CD4-positive, alpha-beta memory T cell (primary cell): ENCODE measurements at regions of chr1 and their contacts with region 1.

Region 1: GRCh38 chr1:19485362-19486187 is at the start of gene CAPZB:
- DNase-seq: peak; percentile 90 to 92 (median 92)
- H3K4me3 ChIP-seq: peak within 1 kb of the TSS; percentile 87 to 88
- H3K4me3 Mint-ChIP-seq: peak within 1 kb of the TSS; percentile 91 to 98 (median 94)
- H3K27ac ChIP-seq: peak within 1 kb of the TSS; percentile 89
- H3K27ac Mint-ChIP-seq: peak within 1 kb of the TSS; percentile 94 to 99 (median 97)
- H3K4me1 ChIP-seq: peaks cover 63% of the 10 kb centered on the region
- H3K4me1 Mint-ChIP-seq: peaks cover 46 to 69% (median 55%) of the 10 kb centered on the region in 4 donors
- H3K27me3 ChIP-seq: no peaks in the 10 kb centered on the region
- H3K27me3 Mint-ChIP-seq: no peaks in the 10 kb centered on the region
- total RNA-seq, gene CAPZB: 244 to 255 TPM

Region 2: GRCh38 chr1:19251305-19252196 is 234.0 kb before region 1 on chr1 and contains the starts of genes EMC1 and MRTO4:
- CTCF ChIA-PET with region 1: no interaction called
- POLR2A ChIA-PET with region 1: no interaction called
- intact Hi-C with region 1: loop called (anchors 5 kb)
- DNase-seq: peak; percentile 88 to 95 (median 89)
- H3K4me3 ChIP-seq: peak within 1 kb of the TSS; percentile 87 to 96
- H3K4me3 Mint-ChIP-seq: peak within 1 kb of the TSS; percentile 90 to 97 (median 94)
- H3K27ac ChIP-seq: peak within 1 kb of the TSS; percentile 89
- H3K27ac Mint-ChIP-seq: peak within 1 kb of the TSS; percentile 92 to 96 (median 95)
- H3K4me1 ChIP-seq: peaks cover 42% of the 10 kb centered on the region
- H3K4me1 Mint-ChIP-seq: peaks cover 15 to 42% (median 24%) of the 10 kb centered on the region in 4 donors
- H3K27me3 ChIP-seq: no peaks in the 10 kb centered on the region
- H3K27me3 Mint-ChIP-seq: no peaks in the 10 kb centered on the region
- total RNA-seq, gene EMC1: 34.7 to 35.3 TPM
- total RNA-seq, gene MRTO4: 17.0 to 18.6 TPM

Region 3: GRCh38 chr1:19390901-19391595 is 94.5 kb before region 1 on chr1:
- CTCF ChIA-PET with region 1: interaction called, 35 read pairs
- POLR2A ChIA-PET with region 1: interaction called, 18 read pairs
- intact Hi-C with region 1: loop called (anchors 1 kb)
- DNase-seq: peak; percentile 83 to 88 (median 86)
- H3K4me3 ChIP-seq: peak overlapping the region; percentile 34 to 46
- H3K4me3 Mint-ChIP-seq: peak overlapping the region; percentile 84 to 94 (median 87)
- H3K27ac ChIP-seq: peak overlapping the region; percentile 64
- H3K27ac Mint-ChIP-seq: peak overlapping the region; percentile 92 to 99 (median 96)
- H3K4me1 ChIP-seq: peaks cover 89% of the 10 kb centered on the region
- H3K4me1 Mint-ChIP-seq: peaks cover 56 to 95% (median 78%) of the 10 kb centered on the region in 4 donors
- H3K27me3 ChIP-seq: no peaks in the 10 kb centered on the region
- H3K27me3 Mint-ChIP-seq: no peaks in the 10 kb centered on the region

Region 4: DNA sequence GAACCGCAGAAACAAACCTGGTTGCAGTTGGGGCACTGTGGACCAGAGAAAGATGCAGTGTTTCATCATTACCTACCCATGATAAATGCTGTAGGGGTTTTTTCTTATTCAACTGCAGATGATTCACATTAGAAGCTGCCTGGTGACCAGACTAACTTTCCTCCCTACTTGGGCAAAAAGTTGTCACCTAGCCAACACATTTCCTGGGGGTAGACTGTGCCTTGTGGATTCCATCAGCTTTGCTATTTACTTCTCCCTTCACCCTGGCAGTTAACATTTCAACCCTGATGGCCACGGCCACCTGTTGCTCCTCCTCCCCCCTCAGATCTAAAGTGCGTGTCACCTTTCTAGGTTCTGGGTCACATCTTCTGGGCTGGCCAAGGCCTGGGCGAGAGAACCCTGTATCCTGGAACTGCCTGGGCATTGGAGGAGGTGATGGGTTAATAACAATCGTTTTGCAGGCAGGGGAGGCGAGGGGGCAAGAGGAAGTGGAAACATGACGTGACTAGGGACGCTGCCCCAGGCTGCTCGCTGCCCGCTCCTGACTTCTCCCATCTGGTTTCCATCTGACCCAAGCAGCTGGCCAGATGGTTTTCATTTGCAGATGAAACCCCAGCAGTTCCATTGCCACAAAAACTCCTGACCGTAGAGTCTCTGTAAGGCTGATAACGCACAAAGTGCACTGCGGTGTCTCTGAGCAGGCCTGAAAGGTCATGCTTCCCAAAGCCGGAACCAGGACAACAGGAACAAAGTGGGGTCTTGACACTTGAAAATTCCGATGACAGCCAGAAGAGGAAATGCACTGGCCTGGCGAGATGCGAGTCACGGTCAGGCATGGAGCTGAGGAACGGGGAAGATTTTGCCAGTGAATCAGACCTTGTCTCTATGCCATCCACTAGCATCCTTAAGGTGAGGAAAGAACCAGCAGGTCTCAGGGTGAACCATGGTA is 36.8 kb before region 1 on chr1:
- CTCF ChIA-PET with region 1: interaction called, 14 read pairs
- POLR2A ChIA-PET with region 1: interaction called, 734 read pairs
- intact Hi-C with region 1: no loop called
- DNase-seq: no peak
- H3K4me3 ChIP-seq: no peak overlapping the region
- H3K4me3 Mint-ChIP-seq: peak overlapping the region in 5 of 8 donors; percentile 12 to 68 (median 46)
- H3K27ac ChIP-seq: no peak overlapping the region
- H3K27ac Mint-ChIP-seq: peak overlapping the region; percentile 58 to 85 (median 78)
- H3K4me1 ChIP-seq: peaks cover 92% of the 10 kb centered on the region
- H3K4me1 Mint-ChIP-seq: peaks cover 63 to 96% (median 79%) of the 10 kb centered on the region in 4 donors
- H3K27me3 ChIP-seq: no peaks in the 10 kb centered on the region
- H3K27me3 Mint-ChIP-seq: no peaks in the 10 kb centered on the region

Region 5: GRCh38 chr1:19462781-19463503 is 22.6 kb before region 1 on chr1:
- CTCF ChIA-PET with region 1: interaction called, 26 read pairs
- POLR2A ChIA-PET with region 1: interaction called, 734 read pairs
- intact Hi-C with region 1: loop called (anchors 1 kb)
- DNase-seq: peak; percentile 78 to 88 (median 83)
- H3K4me3 ChIP-seq: peak overlapping the region; percentile 5 to 46
- H3K4me3 Mint-ChIP-seq: peak overlapping the region; percentile 81 to 93 (median 86)
- H3K27ac ChIP-seq: peak overlapping the region; percentile 71
- H3K27ac Mint-ChIP-seq: peak overlapping the region; percentile 90 to 96 (median 95)
- H3K4me1 ChIP-seq: peaks cover 99% of the 10 kb centered on the region
- H3K4me1 Mint-ChIP-seq: peaks cover 73 to 94% (median 82%) of the 10 kb centered on the region in 4 donors
- H3K27me3 ChIP-seq: no peaks in the 10 kb centered on the region
- H3K27me3 Mint-ChIP-seq: no peaks in the 10 kb centered on the region

Region 6: GRCh38 chr1:19559641-19560040 is 74.1 kb after region 1 on chr1:
- CTCF ChIA-PET with region 1: no interaction called
- POLR2A ChIA-PET with region 1: no interaction called
- intact Hi-C with region 1: no loop called
- DNase-seq: no peak
- H3K4me3 ChIP-seq: no peak overlapping the region
- H3K4me3 Mint-ChIP-seq: no peak overlapping the region
- H3K27ac ChIP-seq: no peak overlapping the region
- H3K27ac Mint-ChIP-seq: peak overlapping the region in 1 of 7 donors; percentile 52
- H3K4me1 ChIP-seq: peaks cover 23% of the 10 kb centered on the region
- H3K4me1 Mint-ChIP-seq: peaks cover 5 to 20% (median 13%) of the 10 kb centered on the region in 4 donors
- H3K27me3 ChIP-seq: no peaks in the 10 kb centered on the region
- H3K27me3 Mint-ChIP-seq: no peaks in the 10 kb centered on the region

Region 7: GRCh38 chr1:19596714-19597495 is 111.3 kb after region 1 on chr1:
- CTCF ChIA-PET with region 1: no interaction called
- POLR2A ChIA-PET with region 1: interaction called, 72 read pairs
- intact Hi-C with region 1: loop called (anchors 1 kb)
- DNase-seq: peak; percentile 97 to 99 (median 98)
- H3K4me3 ChIP-seq: peak overlapping the region; percentile 63 to 88
- H3K4me3 Mint-ChIP-seq: peak overlapping the region; percentile 89 to 100 (median 98)
- H3K27ac ChIP-seq: peak overlapping the region; percentile 100
- H3K27ac Mint-ChIP-seq: peak overlapping the region; percentile 98 to 100 (median 100)
- H3K4me1 ChIP-seq: peaks cover 51% of the 10 kb centered on the region
- H3K4me1 Mint-ChIP-seq: peaks cover 33 to 54% (median 44%) of the 10 kb centered on the region in 4 donors
- H3K27me3 ChIP-seq: no peaks in the 10 kb centered on the region
- H3K27me3 Mint-ChIP-seq: peaks cover 0 to 4% of the 10 kb centered on the region in 2 donors

Region 8: GRCh38 chr1:19750101-19750881 is 264.7 kb after region 1 on chr1:
- CTCF ChIA-PET with region 1: no interaction called
- POLR2A ChIA-PET with region 1: no interaction called
- intact Hi-C with region 1: no loop called
- DNase-seq: no peak
- H3K4me3 ChIP-seq: no peak overlapping the region
- H3K4me3 Mint-ChIP-seq: no peak overlapping the region
- H3K27ac ChIP-seq: no peak overlapping the region
- H3K27ac Mint-ChIP-seq: peak overlapping the region in 2 of 7 donors; percentile 30 to 63
- H3K4me1 ChIP-seq: no peaks in the 10 kb centered on the region
- H3K4me1 Mint-ChIP-seq: no peaks in the 10 kb centered on the region
- H3K27me3 ChIP-seq: no peaks in the 10 kb centered on the region
- H3K27me3 Mint-ChIP-seq: no peaks in the 10 kb centered on the region